HepG2 (cell line): ENCODE measurements at regions of chr17 and their contacts with region 1.

Region 1: DNA sequence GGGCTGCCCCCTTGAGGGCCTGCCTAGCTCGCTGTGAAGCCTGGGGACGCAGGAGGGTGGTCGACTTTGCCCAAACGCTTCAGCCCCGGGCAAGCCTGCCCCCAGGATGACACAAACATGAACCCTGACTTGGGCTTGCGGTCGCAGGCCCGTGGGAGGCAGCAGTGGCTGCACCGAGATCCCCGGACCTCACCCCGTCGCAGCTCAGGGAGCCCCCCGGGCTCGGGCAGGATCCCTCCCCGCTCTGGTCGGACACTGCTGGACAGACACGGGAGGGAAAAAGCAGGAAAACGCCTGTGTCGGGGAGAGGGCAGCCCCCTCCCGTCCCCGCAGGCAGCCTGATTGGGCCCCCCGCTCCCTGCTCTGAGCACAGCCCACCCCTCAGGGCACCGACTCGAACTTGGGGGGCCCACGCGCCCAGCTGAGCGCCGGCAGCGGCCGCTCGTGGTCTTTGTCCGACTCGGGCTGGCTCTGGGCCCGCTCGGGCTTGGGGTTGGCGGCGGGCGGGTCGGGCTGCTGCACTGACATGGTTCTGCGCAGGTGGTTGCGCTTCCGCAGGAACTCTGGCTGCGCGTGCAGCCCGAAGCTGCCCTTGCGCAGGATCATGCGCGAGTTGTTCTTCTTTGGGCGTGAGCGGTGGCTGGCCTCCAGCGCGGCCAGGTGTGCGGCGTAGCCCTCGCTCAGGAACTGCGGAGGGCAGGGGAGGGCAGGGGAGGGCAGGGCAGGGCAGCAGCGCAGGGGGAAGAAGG is 10.9 kb downstream of the PIMREG start:
- DNase-seq: no peak
- ATAC-seq: no peak
- H3K4me3 ChIP-seq: no peak overlapping the region
- H3K27ac ChIP-seq: no peak overlapping the region
- H3K4me1 ChIP-seq: peaks cover 35% of the 10 kb centered on the region
- H3K27me3 ChIP-seq: peaks cover 0 to 3% of the 10 kb centered on the region in 2 experiments; a peak in 3 of 5 replicates
- CTCF ChIP-seq: no peak
- EP300 ChIP-seq: no peak
- POLR2A ChIP-seq: no peak
- RAD21 ChIP-seq: no peak

Region 2: DNA sequence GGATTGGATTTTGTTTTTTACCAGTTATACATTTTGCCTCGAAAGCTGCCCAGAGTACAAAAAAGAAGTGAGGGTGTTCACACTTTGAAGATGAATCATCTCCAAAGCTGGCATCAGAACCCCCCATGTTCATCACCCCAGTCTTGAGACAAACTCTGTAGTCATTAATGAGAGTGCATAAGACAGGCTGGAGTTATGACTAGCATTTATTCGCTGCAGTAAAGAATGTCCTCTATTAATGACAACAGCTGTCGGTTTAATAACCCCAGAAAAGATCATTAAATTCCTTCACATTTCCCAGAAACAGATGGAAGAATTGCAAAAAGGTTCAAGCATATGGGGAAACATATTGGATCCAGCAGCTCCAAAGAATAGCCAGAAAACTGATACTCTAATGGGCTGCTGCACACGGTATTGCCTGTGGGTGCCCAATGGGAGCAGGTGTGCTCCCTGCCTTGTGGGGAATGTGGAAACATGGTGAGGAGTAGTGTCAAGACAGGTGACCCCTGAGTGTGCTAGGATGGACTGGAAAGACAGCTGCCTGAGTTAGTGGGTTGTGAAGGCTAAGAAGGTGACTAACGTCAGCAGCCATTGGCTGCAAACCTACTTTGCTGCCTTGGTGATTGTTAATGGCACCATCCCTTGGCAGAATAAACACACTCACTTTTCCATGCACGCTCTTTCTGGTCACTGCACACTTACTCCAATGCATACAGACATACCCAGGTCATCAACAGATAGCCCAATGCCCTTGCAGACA is 102.2 kb before region 1 on chr17:
- CTCF ChIA-PET with region 1: no interaction called
- POLR2A ChIA-PET with region 1: no interaction called
- in situ Hi-C with region 1: no loop called
- intact Hi-C with region 1: no loop called
- DNase-seq: no peak
- ATAC-seq: no peak
- H3K4me3 ChIP-seq: no peak overlapping the region
- H3K27ac ChIP-seq: no peak overlapping the region
- H3K4me1 ChIP-seq: no peaks in the 10 kb centered on the region
- H3K27me3 ChIP-seq: no peaks in the 10 kb centered on the region
- CTCF ChIP-seq: no peak
- EP300 ChIP-seq: no peak
- POLR2A ChIP-seq: no peak
- RAD21 ChIP-seq: no peak

Region 3: DNA sequence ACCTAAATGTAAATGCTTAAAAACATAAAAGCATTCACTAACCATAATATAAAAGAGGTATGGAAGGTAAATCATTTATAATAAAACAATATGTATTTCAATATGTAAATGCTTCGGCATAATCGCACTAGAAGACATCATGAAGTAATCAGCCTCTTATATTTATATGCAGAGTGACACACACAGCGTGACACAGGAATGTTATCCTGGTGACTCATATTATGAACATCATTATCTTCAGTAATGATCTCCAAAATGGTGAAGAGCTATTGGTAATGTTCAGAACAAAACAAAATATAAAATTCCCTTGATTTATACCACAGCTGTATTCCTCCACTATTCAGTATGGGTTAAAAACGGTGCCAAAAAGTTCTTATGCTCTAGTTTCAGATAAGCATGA is 74.1 kb before region 1 on chr17:
- CTCF ChIA-PET with region 1: no interaction called
- POLR2A ChIA-PET with region 1: no interaction called
- in situ Hi-C with region 1: no loop called
- intact Hi-C with region 1: no loop called
- DNase-seq: no peak
- ATAC-seq: no peak
- H3K4me3 ChIP-seq: no peak overlapping the region
- H3K27ac ChIP-seq: no peak overlapping the region
- H3K4me1 ChIP-seq: no peaks in the 10 kb centered on the region
- H3K27me3 ChIP-seq: 0 out of 5 replicates have a peak, but pooled peaks cover 0 to 3% of the 10 kb centered on the region in 2 experiments
- CTCF ChIP-seq: no peak
- EP300 ChIP-seq: no peak
- POLR2A ChIP-seq: no peak
- RAD21 ChIP-seq: no peak

Region 4: GRCh38 chr17:6443692-6444569 is 11.2 kb before region 1 on chr17 and contains the start of gene PIMREG:
- CTCF ChIA-PET with region 1: no interaction called
- POLR2A ChIA-PET with region 1: no interaction called
- in situ Hi-C with region 1: no loop called
- intact Hi-C with region 1: no loop called
- DNase-seq: peak; percentile 87
- ATAC-seq: peak; percentile 97
- H3K4me3 ChIP-seq: peak within 1 kb of the TSS; percentile 82 to 89 (median 88)
- H3K27ac ChIP-seq: peak within 1 kb of the TSS; percentile 64
- H3K4me1 ChIP-seq: peaks cover 26% of the 10 kb centered on the region
- H3K27me3 ChIP-seq: no peaks in the 10 kb centered on the region; a peak in 1 of 5 replicates
- CTCF ChIP-seq: 0 out of 2 replicates have a peak, but pooled peaks have one; percentile 3
- EP300 ChIP-seq: no peak
- POLR2A ChIP-seq: peak; percentile 59 to 63
- RAD21 ChIP-seq: no peak
- total RNA-seq, gene PIMREG: 30.3 and 33.8 TPM in 2 replicates

Region 5: DNA sequence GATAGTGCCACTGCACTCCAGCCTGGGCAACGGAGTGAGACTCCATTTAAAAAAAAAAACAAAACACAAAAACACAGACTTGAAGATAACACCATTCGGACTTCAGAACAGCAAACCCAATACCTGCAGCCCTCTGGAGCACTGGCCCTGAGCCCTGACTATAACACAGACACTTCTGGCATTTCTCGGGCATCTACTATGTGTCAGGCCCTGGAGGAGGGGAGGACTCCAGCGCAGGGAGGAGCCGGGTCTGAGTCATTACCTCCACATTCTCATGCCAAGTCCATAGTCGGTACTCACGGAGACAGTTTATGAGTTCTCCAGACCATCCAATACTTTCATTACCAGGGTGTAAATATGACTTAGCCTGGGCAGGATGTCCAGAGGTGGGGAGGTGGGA is 52.4 kb after region 1 on chr17:
- CTCF ChIA-PET with region 1: no interaction called
- POLR2A ChIA-PET with region 1: no interaction called
- in situ Hi-C with region 1: loop called (anchors 5 kb)
- intact Hi-C with region 1: no loop called
- DNase-seq: no peak
- ATAC-seq: no peak
- H3K4me3 ChIP-seq: no peak overlapping the region
- H3K27ac ChIP-seq: no peak overlapping the region
- H3K4me1 ChIP-seq: no peaks in the 10 kb centered on the region
- H3K27me3 ChIP-seq: peaks cover 0 to 1% of the 10 kb centered on the region in 2 experiments; a peak in 2 of 5 replicates
- CTCF ChIP-seq: no peak
- EP300 ChIP-seq: no peak
- POLR2A ChIP-seq: no peak
- RAD21 ChIP-seq: no peak